Prostate gland (tissue), 2 donors: ENCODE measurements at regions of chr3 and their contacts with region 1.

Region 1: GRCh38 chr3:183122257-183122932 is 23.1 kb upstream of the MCCC1 start:
- DNase-seq: no peak
- H3K4me3 ChIP-seq: no peak overlapping the region
- H3K27ac ChIP-seq: no peak overlapping the region
- H3K4me1 ChIP-seq: no peaks in the 10 kb centered on the region
- H3K27me3 ChIP-seq: no peaks in the 10 kb centered on the region
- CTCF ChIP-seq: peak; percentile 56 to 94 (median 90)
- POLR2A ChIP-seq: no peak

Region 2: GRCh38 chr3:183188895-183189462 is 66.6 kb after region 1 on chr3:
- intact Hi-C with region 1: loop called (anchors 10 kb)
- DNase-seq: no peak
- H3K4me3 ChIP-seq: no peak overlapping the region
- H3K27ac ChIP-seq: no peak overlapping the region
- H3K4me1 ChIP-seq: no peaks in the 10 kb centered on the region
- H3K27me3 ChIP-seq: no peaks in the 10 kb centered on the region
- CTCF ChIP-seq: peak in 2 of 4 experiments; percentile 13 to 16
- POLR2A ChIP-seq: no peak